PC-3 (cell line): ENCODE measurements at regions of chr19 and their contacts with region 1.

Region 1: DNA sequence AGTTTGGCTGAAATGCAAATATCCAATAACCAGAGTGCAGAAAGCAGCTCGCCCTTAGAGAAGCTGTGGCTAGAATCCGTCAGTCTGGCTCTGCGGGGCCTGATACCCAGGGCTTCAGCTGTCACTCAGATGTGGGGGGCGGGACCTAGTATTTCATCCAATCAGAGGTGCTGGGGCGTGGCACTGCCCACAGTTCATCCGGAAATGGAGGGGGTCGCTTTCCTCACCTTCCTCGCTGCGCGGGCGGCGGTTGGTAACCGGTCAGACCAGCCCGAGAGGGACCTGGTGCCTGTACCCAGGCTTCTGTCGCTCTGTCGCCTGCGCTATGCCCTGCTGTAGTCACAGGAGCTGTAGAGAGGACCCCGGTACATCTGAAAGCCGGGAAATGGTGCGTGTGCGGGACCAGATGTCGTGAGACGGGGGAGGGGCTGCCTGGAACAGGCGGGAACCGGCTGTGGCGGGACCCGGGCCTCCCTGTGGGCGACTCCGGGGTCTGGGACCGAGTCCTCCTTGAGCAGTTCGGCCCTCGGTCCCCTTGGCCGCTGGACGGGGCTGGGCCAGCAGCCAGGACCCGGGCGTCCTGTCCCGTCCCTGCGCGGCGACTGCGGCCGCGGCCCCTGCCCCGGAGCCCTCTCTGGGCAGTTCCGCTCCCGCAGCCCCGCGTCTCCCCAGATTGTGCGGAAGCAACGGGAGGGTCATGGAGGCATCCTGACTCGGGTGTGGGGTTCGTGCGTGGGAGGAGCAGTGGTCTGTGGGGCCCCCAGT is at the start of gene ZNF700:
- DNase-seq: peak; percentile 98
- ATAC-seq: peak; percentile 92
- H3K4me3 ChIP-seq: peak within 1 kb of the TSS; percentile 83
- H3K27ac ChIP-seq: peak within 1 kb of the TSS; percentile 53
- H3K4me1 ChIP-seq: peaks cover 4% of the 10 kb centered on the region; the same call in 1 of the 2 replicates
- H3K27me3 ChIP-seq: no peaks in the 10 kb centered on the region
- CTCF ChIP-seq: no peak
- total RNA-seq, gene ZNF700: 6.7 and 9.5 TPM in 2 replicates

Region 2: DNA sequence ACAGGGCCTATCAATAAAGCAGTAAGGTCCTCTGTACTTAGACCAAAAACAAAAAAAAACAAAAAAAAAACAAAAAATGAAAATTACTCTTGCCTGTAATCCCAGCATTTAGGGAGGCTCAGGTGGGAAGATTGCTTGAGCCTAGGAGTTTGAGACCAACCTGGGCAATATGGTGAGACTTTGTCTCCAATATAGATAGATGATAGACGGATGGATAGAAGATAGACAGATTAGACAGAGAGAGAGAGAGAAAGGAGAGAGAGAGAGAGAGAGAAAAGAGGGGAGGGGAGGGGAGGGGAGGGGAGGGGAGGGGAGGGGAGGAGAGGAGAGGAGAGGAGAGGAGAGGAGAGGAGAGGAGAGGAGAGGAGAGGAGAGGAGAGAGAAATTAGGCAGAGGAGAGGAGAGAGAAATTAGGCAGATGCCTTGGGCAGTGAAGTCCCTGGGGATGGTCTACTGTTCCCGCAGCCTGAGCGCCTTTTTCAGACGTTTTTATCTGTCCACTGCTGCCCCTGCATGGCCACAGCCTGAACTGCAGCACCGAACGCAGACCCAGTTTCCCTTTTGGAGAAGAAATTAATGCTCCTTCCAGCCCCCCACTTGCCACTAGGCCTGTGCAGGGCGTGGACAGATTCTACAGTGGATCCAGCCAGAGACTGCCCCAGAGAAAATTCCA is 337.6 kb before region 1 on chr19:
- CTCF ChIA-PET with region 1: no interaction called
- POLR2A ChIA-PET with region 1: no interaction called
- intact Hi-C with region 1: no loop called
- DNase-seq: peak; percentile 85
- ATAC-seq: peak; percentile 92
- H3K4me3 ChIP-seq: peak overlapping the region; percentile 62
- H3K27ac ChIP-seq: no peak overlapping the region
- H3K4me1 ChIP-seq: 0 out of 2 replicates have a peak, but pooled peaks cover 5% of the 10 kb centered on the region
- H3K27me3 ChIP-seq: no peaks in the 10 kb centered on the region
- CTCF ChIP-seq: peak; percentile 93

Region 3: GRCh38 chr19:11798391-11799330 is 126.4 kb before region 1 on chr19 and contains the start of gene ZNF491:
- CTCF ChIA-PET with region 1: interaction called, 25 read pairs
- POLR2A ChIA-PET with region 1: no interaction called
- intact Hi-C with region 1: loop called (anchors 1 kb)
- DNase-seq: peak; percentile 90
- ATAC-seq: peak; percentile 97
- H3K4me3 ChIP-seq: peak within 1 kb of the TSS; percentile 84
- H3K27ac ChIP-seq: no peak within 1 kb of the TSS
- H3K4me1 ChIP-seq: peaks cover 11% of the 10 kb centered on the region
- H3K27me3 ChIP-seq: no peaks in the 10 kb centered on the region
- CTCF ChIP-seq: peak; percentile 57
- total RNA-seq, gene ZNF491: 0.17 and 0.47 TPM in 2 replicates

Region 4: GRCh38 chr19:11964858-11965645 is 40.0 kb after region 1 on chr19 and contains the start of gene ZNF763:
- CTCF ChIA-PET with region 1: interaction called, 5 read pairs
- POLR2A ChIA-PET with region 1: no interaction called
- intact Hi-C with region 1: loop called (anchors 2 kb)
- DNase-seq: peak; percentile 75
- ATAC-seq: peak; percentile 93
- H3K4me3 ChIP-seq: peak within 1 kb of the TSS; percentile 68
- H3K27ac ChIP-seq: no peak within 1 kb of the TSS
- H3K4me1 ChIP-seq: no peaks in the 10 kb centered on the region
- H3K27me3 ChIP-seq: no peaks in the 10 kb centered on the region
- CTCF ChIP-seq: no peak
- total RNA-seq, gene ZNF763: 0.33 TPM in 1 of 2 replicates, not detected in the other

Region 5: GRCh38 chr19:12035220-12036153 is 110.4 kb after region 1 on chr19 and contains the start of gene ZNF433:
- CTCF ChIA-PET with region 1: interaction called, 4 read pairs
- POLR2A ChIA-PET with region 1: no interaction called
- intact Hi-C with region 1: loop called (anchors 2 kb)
- DNase-seq: peak; percentile 98
- ATAC-seq: peak; percentile 99
- H3K4me3 ChIP-seq: peak within 1 kb of the TSS; percentile 89
- H3K27ac ChIP-seq: 0 out of 2 replicates have a peak within 1 kb of the TSS, but pooled peaks have one; percentile 14
- H3K4me1 ChIP-seq: peaks cover 10% of the 10 kb centered on the region
- H3K27me3 ChIP-seq: no peaks in the 10 kb centered on the region
- CTCF ChIP-seq: no peak
- total RNA-seq, gene ZNF433: 5.4 and 7.8 TPM in 2 replicates

Region 6: DNA sequence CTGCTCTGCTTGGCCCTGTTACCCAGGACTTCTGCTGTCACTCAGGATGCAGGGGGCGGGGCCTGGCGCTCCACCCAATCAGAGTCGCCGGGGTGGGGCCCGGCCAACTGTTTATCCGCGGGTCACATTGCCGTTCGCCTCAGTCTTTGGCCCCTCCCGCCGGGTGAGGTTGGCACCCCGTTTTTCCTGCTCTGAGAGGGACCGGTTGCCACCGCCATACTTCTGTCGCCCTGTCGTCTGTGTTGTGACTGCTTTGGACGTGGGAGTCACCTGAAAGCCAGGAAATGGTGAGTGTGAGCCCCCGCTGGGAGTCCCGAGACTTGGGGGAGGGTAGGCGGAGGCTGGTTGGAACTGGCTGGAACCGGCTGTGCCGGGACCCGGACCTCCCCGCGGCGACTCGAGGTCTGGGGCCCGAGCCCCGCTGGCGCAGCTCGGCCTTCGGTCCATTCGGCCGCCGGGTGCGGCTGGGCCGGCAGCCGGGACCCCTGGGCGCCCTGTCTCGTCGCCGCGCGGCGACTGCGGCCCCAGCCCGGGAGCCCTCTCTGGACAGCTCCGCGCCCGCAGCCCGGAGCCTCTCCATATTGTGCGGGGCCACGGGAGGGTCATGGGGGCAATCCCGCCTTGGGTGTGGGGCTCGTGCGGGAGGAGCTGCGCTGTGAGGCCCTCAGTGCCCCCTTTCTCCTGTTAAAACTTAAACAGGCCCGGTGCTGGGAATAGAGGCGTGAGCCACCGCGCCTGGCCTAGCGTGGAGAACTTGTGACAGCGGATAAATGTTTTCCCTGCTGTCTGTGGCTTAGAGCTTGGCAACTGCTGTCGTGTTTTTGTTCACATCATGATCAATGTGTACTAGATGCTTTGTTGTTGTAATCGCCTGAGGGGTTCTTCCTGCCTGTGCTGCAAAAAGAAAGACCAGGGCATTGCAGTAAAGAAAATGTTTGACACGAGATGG is 139.8 kb after region 1 on chr19 and contains the start of gene ZNF844:
- CTCF ChIA-PET with region 1: interaction called, 11 read pairs
- POLR2A ChIA-PET with region 1: no interaction called
- intact Hi-C with region 1: no loop called
- DNase-seq: peak; percentile 89
- ATAC-seq: peak; percentile 95
- H3K4me3 ChIP-seq: peak within 1 kb of the TSS; percentile 90
- H3K27ac ChIP-seq: peak within 1 kb of the TSS; percentile 10
- H3K4me1 ChIP-seq: no peaks in the 10 kb centered on the region
- H3K27me3 ChIP-seq: no peaks in the 10 kb centered on the region
- CTCF ChIP-seq: no peak
- total RNA-seq, gene ZNF844: 4.0 and 4.7 TPM in 2 replicates